Naive thymus-derived CD8-positive, alpha-beta T cell (primary cell): ENCODE measurements at regions of chr1 and their contacts with region 1.

Region 1: DNA sequence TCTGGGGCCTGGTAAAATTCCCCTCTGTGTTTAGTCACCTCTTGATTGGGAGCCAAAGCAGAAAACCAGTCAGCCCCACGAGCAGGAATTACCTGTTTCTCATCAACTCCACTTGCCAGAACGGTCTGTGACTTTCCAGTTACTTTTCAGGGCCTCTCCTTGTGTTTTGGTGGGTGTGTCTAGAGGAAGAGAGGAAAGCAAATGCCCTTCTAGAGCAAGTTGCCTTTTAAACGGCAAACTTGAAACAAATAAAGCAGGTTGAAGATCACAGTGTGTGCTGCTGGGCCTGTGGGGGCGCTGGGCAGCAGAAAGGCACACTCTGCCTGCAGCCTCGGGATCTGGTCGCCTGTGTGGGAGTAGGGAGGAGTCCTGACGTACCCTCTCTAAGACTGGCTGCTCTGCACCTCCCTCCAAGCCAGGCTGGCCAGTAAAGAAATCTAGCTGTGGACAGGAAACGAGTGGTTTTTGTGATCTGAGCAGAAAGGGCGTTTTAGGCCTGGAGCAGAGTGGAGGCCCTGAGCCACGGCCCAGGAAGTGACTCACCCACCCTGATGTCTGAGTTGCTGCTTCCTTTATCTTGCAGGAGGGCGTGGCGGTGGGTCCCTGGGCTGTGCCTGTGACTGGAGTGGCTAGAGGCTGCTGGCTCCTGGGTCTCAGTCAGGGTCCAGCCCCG is 11.1 kb upstream of the S100A11 start:
- DNase-seq: peak; percentile 54 to 90 (median 72)
- ATAC-seq: peak; percentile 91 to 92
- H3K4me3 Mint-ChIP-seq: peak overlapping the region; percentile 65 to 88 (median 82)
- H3K27ac Mint-ChIP-seq: peak overlapping the region; percentile 96 to 99 (median 98)
- H3K4me1 Mint-ChIP-seq: peaks cover 14 to 53% (median 31%) of the 10 kb centered on the region in 4 donors
- H3K27me3 Mint-ChIP-seq: peaks cover 0 to 4% (median 0%) of the 10 kb centered on the region in 5 donors

Region 2: GRCh38 chr1:152034646-152035405 is 13.0 kb before region 1 on chr1:
- POLR2A ChIA-PET with region 1: interaction called, 112 read pairs
- DNase-seq: peak; percentile 26 to 75 (median 61)
- ATAC-seq: peak; percentile 78 to 90
- H3K4me3 Mint-ChIP-seq: peak overlapping the region; percentile 90 to 100 (median 96)
- H3K27ac Mint-ChIP-seq: peak overlapping the region; percentile 91 to 100 (median 98)
- H3K4me1 Mint-ChIP-seq: peaks cover 27 to 60% (median 47%) of the 10 kb centered on the region in 4 donors
- H3K27me3 Mint-ChIP-seq: no peaks in the 10 kb centered on the region

Region 3: GRCh38 chr1:152185544-152186391 is 137.9 kb after region 1 on chr1:
- POLR2A ChIA-PET with region 1: interaction called, 11 read pairs
- DNase-seq: peak in 8 of 10 donors; percentile 22 to 64 (median 35)
- ATAC-seq: peak; percentile 50 to 55
- H3K4me3 Mint-ChIP-seq: no peak overlapping the region
- H3K27ac Mint-ChIP-seq: peak overlapping the region in 2 of 10 donors; percentile 5 to 31
- H3K4me1 Mint-ChIP-seq: peaks cover 0 to 13% (median 8%) of the 10 kb centered on the region in 4 donors
- H3K27me3 Mint-ChIP-seq: peaks cover 2 to 22% (median 5%) of the 10 kb centered on the region in 5 donors